ENCODE measurements at regions of chr19 and their contacts with region 1.

Region 1: DNA sequence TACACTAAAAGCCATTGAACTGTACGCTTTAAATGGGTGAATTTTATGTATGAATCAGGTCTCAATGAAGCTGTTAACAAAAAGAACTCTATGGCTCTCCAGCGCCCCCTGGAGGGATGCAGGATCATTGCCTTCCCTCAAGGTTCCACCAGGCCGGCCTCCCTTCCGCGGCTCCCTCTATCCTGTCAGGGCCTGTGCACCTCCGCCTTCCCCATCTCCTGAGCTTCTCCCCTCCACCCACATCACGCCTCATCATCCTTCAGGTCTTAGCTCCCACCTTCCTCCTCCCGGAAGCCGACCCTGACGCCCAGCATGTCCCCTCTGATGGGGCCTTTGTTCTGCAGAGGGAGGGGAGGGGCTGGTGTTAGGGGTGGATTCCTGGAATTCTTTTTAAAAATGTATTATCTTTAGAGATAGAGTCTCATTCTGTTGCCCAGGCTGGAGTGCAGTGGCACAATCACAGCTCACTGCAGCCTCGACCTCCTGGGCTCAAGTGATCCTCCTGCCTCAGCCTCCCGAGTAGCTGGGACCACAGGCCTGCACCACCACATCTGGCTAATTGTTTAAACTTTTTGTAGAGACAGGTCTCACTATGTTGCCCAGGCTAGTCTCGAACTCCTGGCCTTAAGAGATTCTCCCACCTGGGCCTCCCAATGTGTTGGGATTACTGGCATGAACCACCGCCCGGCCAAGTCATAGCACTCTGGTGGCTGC is 27.7 kb downstream of the MEIS3 start:
- DNase-seq: peak; percentile 12
- ATAC-seq: peak; percentile 98
- H3K4me3 ChIP-seq: no peak overlapping the region
- H3K27ac ChIP-seq: no peak overlapping the region; the same call in 1 of the 2 replicates
- H3K4me1 ChIP-seq: no peaks in the 10 kb centered on the region
- H3K27me3 ChIP-seq: no peaks in the 10 kb centered on the region
- CTCF ChIP-seq: peak; percentile 86 to 92 (median 88)
- EP300 ChIP-seq: no peak
- POLR2A ChIP-seq: no peak
- RAD21 ChIP-seq: peak; percentile 73

Region 2: DNA sequence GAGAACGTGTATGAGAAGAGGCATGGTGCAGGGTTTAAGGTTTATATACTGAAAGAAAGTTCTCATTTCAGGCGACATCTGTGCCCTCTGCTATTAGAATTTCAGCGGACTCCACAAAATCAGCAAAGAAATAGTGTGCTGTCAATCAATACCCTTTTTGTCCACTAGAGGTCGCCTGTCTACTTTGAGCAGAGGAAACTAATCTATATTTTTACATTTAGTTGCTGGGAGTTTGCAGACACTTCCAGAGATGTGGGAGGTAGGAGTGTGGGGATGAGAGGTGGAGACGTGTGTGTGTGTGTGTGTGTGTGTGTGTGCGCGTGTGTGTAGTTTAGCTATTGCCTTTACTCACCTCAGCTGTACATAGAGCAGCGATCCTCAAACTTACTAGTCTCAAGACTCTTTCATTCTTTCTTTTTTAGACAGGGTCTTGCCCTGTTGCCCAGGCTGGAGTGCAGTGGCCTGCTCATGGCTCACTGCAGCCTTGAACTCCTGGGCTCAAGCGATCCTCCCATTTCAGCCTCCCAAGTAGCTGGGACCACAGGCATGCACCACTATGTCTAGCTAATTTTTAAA is 107.3 kb before region 1 on chr19:
- CTCF ChIA-PET with region 1: interaction called, 25 read pairs
- POLR2A ChIA-PET with region 1: no interaction called
- RAD21 ChIA-PET with region 1: interaction called, 7 read pairs
- SMC1A ChIA-PET with region 1: interaction called, 7 read pairs
- in situ Hi-C with region 1: no loop called
- intact Hi-C with region 1: loop called (anchors 2 kb)
- DNase-seq: no peak
- ATAC-seq: peak; percentile 46
- H3K4me3 ChIP-seq: no peak overlapping the region
- H3K27ac ChIP-seq: no peak overlapping the region
- H3K4me1 ChIP-seq: peaks cover 15% of the 10 kb centered on the region
- H3K27me3 ChIP-seq: no peaks in the 10 kb centered on the region
- CTCF ChIP-seq: peak; percentile 73 to 85 (median 79)
- EP300 ChIP-seq: no peak
- POLR2A ChIP-seq: no peak
- RAD21 ChIP-seq: peak; percentile 58

Region 3: GRCh38 chr19:47296036-47296435 is 95.6 kb before region 1 on chr19:
- CTCF ChIA-PET with region 1: interaction called, 83 read pairs
- POLR2A ChIA-PET with region 1: no interaction called
- RAD21 ChIA-PET with region 1: interaction called, 21 read pairs
- SMC1A ChIA-PET with region 1: interaction called, 28 read pairs
- in situ Hi-C with region 1: loop called (anchors 5 kb)
- intact Hi-C with region 1: loop called (anchors 1 kb)
- DNase-seq: no peak
- ATAC-seq: peak; percentile 94
- H3K4me3 ChIP-seq: no peak overlapping the region
- H3K27ac ChIP-seq: no peak overlapping the region
- H3K4me1 ChIP-seq: peaks cover 12% of the 10 kb centered on the region
- H3K27me3 ChIP-seq: no peaks in the 10 kb centered on the region
- CTCF ChIP-seq: peak; percentile 66 to 86 (median 69)
- EP300 ChIP-seq: no peak
- POLR2A ChIP-seq: no peak
- RAD21 ChIP-seq: peak; percentile 89

Region 4: DNA sequence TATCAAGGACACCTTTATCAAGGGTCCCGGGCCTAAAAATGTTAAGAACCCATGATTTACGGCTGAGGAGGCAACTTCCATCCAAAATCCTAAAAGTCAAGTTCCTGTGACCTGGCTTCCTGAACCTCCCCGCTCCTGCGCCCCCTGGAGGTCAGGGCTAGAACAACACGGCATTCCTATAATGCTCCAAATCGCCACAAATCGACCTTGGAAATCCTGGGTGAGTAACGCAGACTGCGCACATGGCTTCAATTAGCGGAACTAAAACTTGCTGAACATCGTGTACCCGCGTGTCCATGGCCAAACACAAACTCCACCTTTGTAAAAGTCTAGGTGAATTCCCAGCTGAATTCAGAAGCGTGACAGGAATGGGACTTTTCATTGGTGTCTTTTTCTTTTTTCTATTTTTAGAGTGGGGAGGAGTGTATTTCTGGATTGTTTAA is 86.3 kb before region 1 on chr19:
- CTCF ChIA-PET with region 1: interaction called, 12 read pairs
- POLR2A ChIA-PET with region 1: no interaction called
- RAD21 ChIA-PET with region 1: interaction called, 3 read pairs
- SMC1A ChIA-PET with region 1: interaction called, 3 read pairs
- in situ Hi-C with region 1: no loop called
- intact Hi-C with region 1: no loop called
- DNase-seq: peak; percentile 62
- ATAC-seq: peak; percentile 65
- H3K4me3 ChIP-seq: no peak overlapping the region
- H3K27ac ChIP-seq: no peak overlapping the region
- H3K4me1 ChIP-seq: peaks cover 7% of the 10 kb centered on the region
- H3K27me3 ChIP-seq: no peaks in the 10 kb centered on the region
- CTCF ChIP-seq: peak; percentile 77 to 97 (median 97)
- EP300 ChIP-seq: 0 out of 4 replicates have a peak, but pooled peaks of 1 of the 2 experiments have one; percentile 31
- POLR2A ChIP-seq: no peak
- RAD21 ChIP-seq: no peak

Measured in GM12878 (cell line).